Mammary epithelial cell (primary cell): ENCODE measurements at regions of chr1 and their contacts with region 1.

Region 1: GRCh38 chr1:167328816-167329483 is 108.3 kb downstream of the POU2F1 start:
- DNase-seq: no peak
- H3K4me3 ChIP-seq: no peak overlapping the region
- H3K27ac ChIP-seq: no peak overlapping the region
- H3K4me1 ChIP-seq: no peaks in the 10 kb centered on the region
- H3K27me3 ChIP-seq: no peaks in the 10 kb centered on the region
- CTCF ChIP-seq: no peak

Region 2: DNA sequence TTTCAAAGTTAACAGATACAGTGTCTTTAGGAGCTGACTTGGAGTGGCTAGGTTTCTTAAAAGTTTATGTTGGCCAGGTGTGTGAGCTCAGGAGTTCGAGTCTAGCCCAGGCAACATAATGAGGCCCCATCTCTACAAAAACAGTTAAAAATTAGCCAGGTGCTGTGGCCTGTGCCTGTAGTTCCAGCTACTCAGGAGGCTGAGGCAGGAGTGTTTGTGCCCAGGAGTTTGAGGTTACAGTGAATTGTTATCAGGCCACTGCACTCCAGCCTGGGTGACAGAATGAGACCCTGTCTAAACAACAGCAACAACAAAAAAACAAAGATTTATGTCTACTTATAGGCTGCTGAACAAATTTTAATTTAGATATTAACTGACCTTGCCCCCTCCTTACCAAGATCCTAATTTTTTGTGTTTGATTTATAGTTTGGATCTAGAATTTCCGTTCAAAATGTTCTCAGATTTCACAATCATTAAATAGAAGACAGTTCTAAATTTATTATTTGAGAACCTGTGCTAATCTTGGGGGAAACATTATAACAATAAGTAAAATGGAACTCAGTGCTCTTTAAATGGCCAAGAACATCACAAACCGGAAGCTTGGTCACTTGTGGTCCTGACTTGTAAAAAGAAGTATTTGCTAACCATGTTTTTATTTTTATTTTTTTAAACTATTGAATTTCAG is 40.4 kb before region 1 on chr1:
- CTCF ChIA-PET with region 1: no interaction called
- dilution Hi-C with region 1: loop called (anchors 5 kb)
- in situ Hi-C with region 1: no loop called
- intact Hi-C with region 1: no loop called
- DNase-seq: no peak
- H3K4me3 ChIP-seq: no peak overlapping the region
- H3K27ac ChIP-seq: no peak overlapping the region
- H3K4me1 ChIP-seq: no peaks in the 10 kb centered on the region
- H3K27me3 ChIP-seq: no peaks in the 10 kb centered on the region
- CTCF ChIP-seq: no peak

Region 3: DNA sequence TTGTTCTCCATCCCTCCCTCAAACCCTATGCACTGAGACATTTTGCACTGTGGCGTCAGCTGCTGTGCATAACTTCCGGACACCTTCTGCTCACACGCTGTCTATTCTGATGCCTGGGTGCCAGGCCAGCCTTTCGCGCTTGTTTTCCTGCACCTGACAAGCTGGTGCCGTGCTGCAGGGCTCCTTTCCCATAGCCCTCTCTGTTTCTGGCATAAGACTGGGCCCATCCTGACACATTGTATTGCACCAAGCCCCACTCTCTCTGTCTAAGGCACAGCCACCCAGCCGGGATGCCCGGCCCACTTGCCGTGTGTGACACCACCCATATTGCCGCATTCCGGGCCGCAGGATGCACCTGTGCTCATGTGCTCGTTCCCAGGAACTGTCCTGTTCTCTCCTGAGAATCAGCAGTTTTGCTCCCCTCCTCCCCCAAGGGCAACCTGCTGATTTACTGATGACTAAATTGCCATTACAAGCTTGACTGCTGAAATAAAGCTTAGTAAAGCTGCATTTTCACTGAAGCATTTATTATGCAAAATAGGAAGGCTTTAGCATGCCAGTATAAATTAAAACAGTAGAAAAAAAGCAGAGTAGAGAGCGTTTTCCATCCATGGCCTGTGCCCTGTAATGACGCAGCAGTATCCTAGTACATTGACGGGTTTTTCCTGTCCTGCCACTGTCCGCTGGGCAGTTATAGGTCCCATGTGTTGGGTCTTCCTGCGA is 101.3 kb after region 1 on chr1:
- CTCF ChIA-PET with region 1: no interaction called
- dilution Hi-C with region 1: no loop called
- in situ Hi-C with region 1: no loop called
- intact Hi-C with region 1: no loop called
- DNase-seq: no peak
- H3K4me3 ChIP-seq: no peak overlapping the region
- H3K27ac ChIP-seq: no peak overlapping the region
- H3K4me1 ChIP-seq: no peaks in the 10 kb centered on the region
- H3K27me3 ChIP-seq: no peaks in the 10 kb centered on the region
- CTCF ChIP-seq: no peak